PC-3 (cell line): ENCODE measurements at regions of chr1 and their contacts with region 1.

Region 1: GRCh38 chr1:99906535-99906934 is 56.4 kb downstream of the AGL start:
- DNase-seq: no peak
- ATAC-seq: no peak
- H3K4me3 ChIP-seq: no peak overlapping the region
- H3K27ac ChIP-seq: no peak overlapping the region
- H3K4me1 ChIP-seq: no peaks in the 10 kb centered on the region
- H3K27me3 ChIP-seq: no peaks in the 10 kb centered on the region
- CTCF ChIP-seq: no peak

Region 2: DNA sequence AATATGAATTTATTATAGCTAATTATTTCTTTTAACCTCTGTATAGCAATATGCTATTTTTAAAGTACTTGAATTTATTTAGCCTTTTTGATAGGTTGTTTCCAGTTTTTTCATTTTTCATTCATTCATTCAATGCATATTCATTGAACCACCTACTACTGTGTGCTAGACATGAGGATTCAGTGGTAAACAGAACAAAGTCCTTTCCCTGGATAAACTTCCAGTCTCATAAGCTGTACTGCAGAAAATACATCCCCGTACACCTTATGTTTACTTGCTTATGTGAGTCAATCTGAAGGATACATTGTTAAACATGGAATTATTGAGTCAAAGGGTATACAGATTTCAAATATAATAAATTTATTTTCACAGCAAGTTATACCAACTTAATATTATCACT is 34.5 kb before region 1 on chr1:
- CTCF ChIA-PET with region 1: no interaction called
- POLR2A ChIA-PET with region 1: no interaction called
- intact Hi-C with region 1: loop called (anchors 1 kb)
- DNase-seq: no peak
- ATAC-seq: peak; percentile 58
- H3K4me3 ChIP-seq: no peak overlapping the region
- H3K27ac ChIP-seq: no peak overlapping the region
- H3K4me1 ChIP-seq: peaks cover 8% of the 10 kb centered on the region; the same call in 1 of the 2 replicates
- H3K27me3 ChIP-seq: no peaks in the 10 kb centered on the region
- CTCF ChIP-seq: no peak

Region 3: DNA sequence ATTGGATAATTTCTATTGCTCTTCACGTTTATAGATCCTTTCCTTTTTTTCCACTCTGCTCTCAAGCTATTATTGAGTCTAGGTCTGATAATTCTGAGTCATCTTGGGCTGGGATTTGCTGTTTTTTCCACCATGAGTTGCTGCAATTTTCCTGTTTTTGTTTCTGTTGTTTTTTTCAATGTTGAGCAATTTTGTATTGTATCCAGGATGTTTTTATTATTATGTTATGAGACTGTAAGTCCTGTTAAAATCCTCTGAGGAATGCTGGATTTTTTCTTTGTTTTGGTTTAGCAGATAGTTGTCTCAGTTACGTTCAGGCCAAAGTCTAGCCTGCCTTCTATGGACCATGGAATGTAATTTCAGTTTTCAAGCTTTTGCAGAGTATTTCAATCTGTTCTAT is 50.2 kb after region 1 on chr1:
- CTCF ChIA-PET with region 1: no interaction called
- POLR2A ChIA-PET with region 1: no interaction called
- intact Hi-C with region 1: no loop called
- DNase-seq: no peak
- ATAC-seq: no peak
- H3K4me3 ChIP-seq: no peak overlapping the region
- H3K27ac ChIP-seq: no peak overlapping the region
- H3K4me1 ChIP-seq: no peaks in the 10 kb centered on the region
- H3K27me3 ChIP-seq: no peaks in the 10 kb centered on the region
- CTCF ChIP-seq: no peak